Naive thymus-derived CD4-positive, alpha-beta T cell (primary cell): ENCODE measurements at regions of chr13 and their contacts with region 1.

Region 1: DNA sequence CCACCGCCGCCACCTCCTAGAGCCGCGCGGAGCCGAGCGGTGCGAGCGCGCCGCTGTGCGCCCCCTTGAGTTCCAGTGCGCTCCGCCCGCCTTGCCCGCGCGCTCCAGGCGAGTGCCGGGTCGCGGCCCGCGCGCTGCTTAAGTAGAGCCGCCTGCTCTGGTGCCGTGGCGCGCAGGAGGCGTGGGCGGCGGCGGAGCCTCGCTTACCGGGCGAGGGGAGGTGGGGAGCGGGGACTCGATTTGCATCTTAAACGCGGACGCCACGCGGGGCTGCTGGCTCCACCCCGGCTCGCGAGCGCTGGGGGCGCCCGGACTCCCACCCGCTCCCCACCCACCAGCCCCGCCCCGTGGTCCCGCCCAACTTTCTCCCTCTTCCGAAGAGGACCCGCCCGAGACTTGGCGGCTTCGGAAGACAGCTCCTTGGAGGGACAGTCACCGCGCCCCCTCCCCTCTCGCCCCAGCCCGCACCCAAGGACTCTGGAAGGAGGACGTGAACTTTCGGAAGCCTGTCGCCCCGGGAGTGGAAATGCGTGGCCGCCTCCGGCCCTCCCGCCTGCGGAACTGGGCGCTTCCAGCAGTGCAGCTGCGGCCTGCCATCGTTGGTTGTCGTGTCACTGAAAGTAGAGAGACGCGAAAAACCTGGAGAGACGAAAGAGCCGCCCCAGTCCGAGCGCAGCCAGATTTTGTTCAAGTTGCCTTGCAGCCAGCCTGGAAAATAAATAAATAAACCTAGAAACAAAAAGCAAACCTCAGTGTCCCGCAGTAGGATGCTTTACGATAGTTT is at the start of gene KCTD12:
- DNase-seq: peak; percentile 73 to 84 (median 80)
- ATAC-seq: peak; percentile 86
- H3K4me3 ChIP-seq: peak within 1 kb of the TSS; percentile 62
- H3K4me3 Mint-ChIP-seq: peak within 1 kb of the TSS; percentile 88 to 95 (median 92)
- H3K27ac ChIP-seq: peak within 1 kb of the TSS; percentile 55
- H3K27ac Mint-ChIP-seq: peak within 1 kb of the TSS; percentile 63 to 85 (median 76)
- H3K4me1 ChIP-seq: peaks cover 4 to 8% of the 10 kb centered on the region in 2 donors
- H3K4me1 Mint-ChIP-seq: peaks cover 20 to 37% (median 32%) of the 10 kb centered on the region in 7 donors
- H3K27me3 ChIP-seq: peaks cover 0 to 3% of the 10 kb centered on the region in 2 donors
- H3K27me3 Mint-ChIP-seq: peaks cover 0 to 47% (median 8%) of the 10 kb centered on the region in 5 donors
- total RNA-seq, gene KCTD12: 7.6 to 48.0 (median 14.0) TPM

Region 2: DNA sequence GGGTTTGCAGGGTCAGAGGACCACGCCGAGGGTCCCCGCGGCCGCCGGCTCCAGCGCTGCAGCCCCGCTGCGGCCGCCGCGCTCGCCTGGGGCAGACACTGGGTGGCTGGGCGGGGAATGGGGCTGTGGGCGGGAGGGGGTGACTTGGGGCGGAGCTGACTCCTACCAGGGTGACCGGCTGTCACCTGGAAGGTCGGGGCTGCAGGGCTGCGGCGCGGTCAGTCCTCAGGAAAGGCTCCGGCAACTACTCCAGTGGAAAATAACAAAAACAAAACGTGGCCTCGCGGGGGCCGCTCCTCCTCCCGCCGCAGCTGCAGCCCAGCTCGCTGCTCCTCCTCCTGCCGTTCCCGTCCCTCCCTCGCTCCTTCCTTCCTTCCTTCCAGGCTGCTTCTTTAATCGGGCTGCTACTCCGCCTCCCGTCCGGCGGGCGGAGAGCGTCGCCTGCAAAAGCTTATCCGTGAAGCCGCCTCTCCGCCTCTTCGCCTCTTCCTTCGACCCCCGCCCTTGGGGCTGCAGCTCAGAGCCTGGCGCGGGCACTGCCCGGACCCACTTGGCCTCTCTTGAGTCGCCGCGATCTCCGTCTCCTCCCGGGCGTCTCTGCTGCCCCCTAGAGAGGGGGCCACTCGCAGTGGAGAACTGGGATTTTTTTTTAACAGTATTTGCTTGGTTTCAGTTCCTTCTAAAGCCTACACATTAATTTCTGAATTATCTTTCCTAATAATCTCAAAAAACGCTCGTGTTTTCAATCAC is 1404.2 kb before region 1 on chr13 and contains the start of gene TBC1D4:
- CTCF ChIA-PET with region 1: no interaction called
- POLR2A ChIA-PET with region 1: no interaction called
- intact Hi-C with region 1: loop called in 1 of 2 experiments (anchors 5 kb)
- DNase-seq: peak in 8 of 9 donors; percentile 19 to 69 (median 22)
- ATAC-seq: peak; percentile 85
- H3K4me3 ChIP-seq: peak within 1 kb of the TSS; percentile 60
- H3K4me3 Mint-ChIP-seq: peak within 1 kb of the TSS; percentile 90 to 99 (median 95)
- H3K27ac ChIP-seq: no peak within 1 kb of the TSS
- H3K27ac Mint-ChIP-seq: peak within 1 kb of the TSS in 1 of 9 donors; percentile 83
- H3K4me1 ChIP-seq: peaks cover 0 to 5% of the 10 kb centered on the region in 2 donors
- H3K4me1 Mint-ChIP-seq: peaks cover 7 to 24% (median 18%) of the 10 kb centered on the region in 7 donors
- H3K27me3 ChIP-seq: peaks cover 12 to 15% of the 10 kb centered on the region in 2 donors
- H3K27me3 Mint-ChIP-seq: peaks cover 57 to 80% (median 74%) of the 10 kb centered on the region in 5 donors
- total RNA-seq, gene TBC1D4: 12.4 to 73.8 (median 42.8) TPM

Region 3: DNA sequence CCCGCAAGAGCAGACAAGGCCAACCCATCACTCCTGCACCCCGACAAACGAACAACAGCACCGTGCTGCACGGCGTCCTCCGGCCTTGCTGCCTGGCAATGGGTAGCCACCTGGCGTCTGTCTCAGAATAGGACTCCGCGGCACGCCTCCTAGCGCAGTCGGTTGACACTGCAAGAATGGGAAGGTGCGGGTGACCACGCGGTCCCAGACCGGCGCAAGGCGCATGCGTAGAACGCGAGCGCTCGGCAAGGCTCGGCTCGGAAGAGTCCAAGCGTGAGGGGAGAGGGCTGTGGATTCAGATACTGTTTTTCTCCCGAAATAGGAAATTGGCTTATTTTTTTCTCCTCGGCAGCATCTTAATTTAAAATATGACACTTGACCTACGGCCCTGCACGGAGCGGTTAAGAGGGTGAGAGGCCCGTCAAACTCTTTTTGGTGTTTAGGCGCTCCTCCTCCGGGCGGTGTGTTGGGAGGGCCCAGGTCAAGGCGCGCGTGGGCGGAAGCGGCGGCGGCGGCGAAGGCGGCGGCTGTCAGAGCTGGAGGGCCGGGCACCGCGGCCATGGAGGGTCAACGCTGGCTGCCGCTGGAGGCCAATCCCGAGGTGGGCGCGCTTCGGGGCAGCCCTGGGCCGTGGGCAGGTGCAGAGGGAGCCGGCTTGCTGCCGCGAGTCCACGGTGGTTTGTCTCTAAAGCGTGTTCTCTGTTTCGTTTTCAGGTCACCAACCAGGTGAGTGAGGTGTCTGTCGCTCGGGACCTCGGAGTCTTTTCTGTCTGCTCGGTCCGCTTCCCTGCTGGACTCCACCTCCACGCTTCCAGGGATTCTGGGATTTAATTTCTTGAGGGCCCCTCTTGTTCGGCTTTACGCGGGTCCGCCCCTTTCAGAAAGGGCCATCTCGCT is 1337.0 kb before region 1 on chr13 and contains the start of gene UCHL3:
- CTCF ChIA-PET with region 1: no interaction called
- POLR2A ChIA-PET with region 1: no interaction called
- intact Hi-C with region 1: loop called in 1 of 2 experiments (anchors 1 kb)
- DNase-seq: peak; percentile 94 to 99 (median 97)
- ATAC-seq: peak; percentile 97
- H3K4me3 ChIP-seq: peak within 1 kb of the TSS; percentile 95
- H3K4me3 Mint-ChIP-seq: peak within 1 kb of the TSS; percentile 91 to 99 (median 96)
- H3K27ac ChIP-seq: peak within 1 kb of the TSS; percentile 84
- H3K27ac Mint-ChIP-seq: peak within 1 kb of the TSS; percentile 94 to 99 (median 98)
- H3K4me1 ChIP-seq: peaks cover 15% of the 10 kb centered on the region in 2 donors
- H3K4me1 Mint-ChIP-seq: peaks cover 27 to 53% (median 46%) of the 10 kb centered on the region in 7 donors
- H3K27me3 ChIP-seq: no peaks in the 10 kb centered on the region
- H3K27me3 Mint-ChIP-seq: peaks cover 0 to 2% (median 0%) of the 10 kb centered on the region in 5 donors
- total RNA-seq, gene UCHL3: 18.6 to 35.8 (median 20.6) TPM

Region 4: GRCh38 chr13:75760131-75761021 is 1126.1 kb before region 1 on chr13:
- CTCF ChIA-PET with region 1: no interaction called
- POLR2A ChIA-PET with region 1: interaction called, 19 read pairs
- intact Hi-C with region 1: loop called (anchors 5 kb)
- DNase-seq: peak in 7 of 9 donors; percentile 29 to 60 (median 46)
- ATAC-seq: peak; percentile 75
- H3K4me3 ChIP-seq: peak overlapping the region; percentile 65
- H3K4me3 Mint-ChIP-seq: peak overlapping the region; percentile 79 to 96 (median 92)
- H3K27ac ChIP-seq: peak overlapping the region; percentile 78
- H3K27ac Mint-ChIP-seq: peak overlapping the region; percentile 86 to 99 (median 96)
- H3K4me1 ChIP-seq: peaks cover 30 to 32% of the 10 kb centered on the region in 2 donors
- H3K4me1 Mint-ChIP-seq: peaks cover 37 to 72% (median 68%) of the 10 kb centered on the region in 7 donors
- H3K27me3 ChIP-seq: no peaks in the 10 kb centered on the region
- H3K27me3 Mint-ChIP-seq: no peaks in the 10 kb centered on the region

Region 5: GRCh38 chr13:76667551-76667950 is 218.9 kb before region 1 on chr13:
- CTCF ChIA-PET with region 1: interaction called, 6 read pairs
- POLR2A ChIA-PET with region 1: interaction called, 4 read pairs
- intact Hi-C with region 1: loop called in 1 of 2 experiments (anchors 1 kb)
- DNase-seq: peak in 6 of 9 donors; percentile 11 to 38 (median 20)
- ATAC-seq: peak; percentile 63
- H3K4me3 ChIP-seq: no peak overlapping the region
- H3K4me3 Mint-ChIP-seq: no peak overlapping the region
- H3K27ac ChIP-seq: no peak overlapping the region
- H3K27ac Mint-ChIP-seq: no peak overlapping the region
- H3K4me1 ChIP-seq: no peaks in the 10 kb centered on the region
- H3K4me1 Mint-ChIP-seq: no peaks in the 10 kb centered on the region
- H3K27me3 ChIP-seq: no peaks in the 10 kb centered on the region
- H3K27me3 Mint-ChIP-seq: peaks cover 0 to 10% (median 0%) of the 10 kb centered on the region in 5 donors

Region 6: GRCh38 chr13:76822698-76823267 is 63.7 kb before region 1 on chr13:
- CTCF ChIA-PET with region 1: interaction called, 18 read pairs
- POLR2A ChIA-PET with region 1: interaction called, 14 read pairs
- intact Hi-C with region 1: loop called (anchors 1 to 5 kb)
- DNase-seq: peak in 6 of 9 donors; percentile 5 to 36 (median 22)
- ATAC-seq: peak; percentile 52
- H3K4me3 ChIP-seq: no peak overlapping the region
- H3K4me3 Mint-ChIP-seq: no peak overlapping the region
- H3K27ac ChIP-seq: no peak overlapping the region
- H3K27ac Mint-ChIP-seq: no peak overlapping the region
- H3K4me1 ChIP-seq: no peaks in the 10 kb centered on the region
- H3K4me1 Mint-ChIP-seq: peaks cover 0 to 3% (median 0%) of the 10 kb centered on the region in 7 donors
- H3K27me3 ChIP-seq: no peaks in the 10 kb centered on the region
- H3K27me3 Mint-ChIP-seq: peaks cover 0 to 7% (median 0%) of the 10 kb centered on the region in 5 donors

Region 7: DNA sequence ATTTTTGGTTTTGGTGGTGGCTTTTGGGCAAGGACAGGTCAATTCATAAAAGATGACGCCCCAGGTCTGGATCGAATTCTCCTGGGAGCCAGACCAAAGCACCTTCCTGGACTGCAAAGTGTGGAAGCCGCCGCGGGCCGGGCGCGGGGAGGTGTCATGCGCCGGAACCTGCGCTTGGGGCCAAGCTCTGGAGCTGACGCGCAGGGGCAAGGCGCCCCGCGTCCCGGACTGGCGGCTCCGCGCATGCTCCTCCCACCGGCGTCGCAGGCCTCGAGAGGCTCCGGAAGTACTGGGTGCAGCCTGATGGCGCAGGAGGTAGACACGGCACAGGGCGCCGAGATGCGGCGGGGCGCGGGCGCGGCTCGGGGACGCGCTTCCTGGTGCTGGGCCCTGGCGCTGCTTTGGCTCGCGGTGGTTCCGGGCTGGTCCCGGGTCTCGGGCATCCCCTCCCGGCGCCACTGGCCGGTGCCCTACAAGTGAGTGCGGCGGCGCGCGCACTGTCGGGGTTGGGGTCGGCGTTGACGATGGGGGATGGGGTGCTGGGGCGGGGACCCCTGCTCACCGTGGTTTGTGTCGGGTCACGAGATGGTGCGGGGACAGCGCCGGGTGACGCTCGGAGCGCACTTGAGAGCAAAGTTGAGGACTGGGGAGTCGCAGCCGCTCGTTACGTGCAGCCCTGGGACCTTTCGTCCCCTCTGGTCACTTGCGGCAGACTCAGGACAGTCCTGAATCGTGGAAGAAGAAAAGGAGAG is 105.5 kb after region 1 on chr13 and contains the start of gene CLN5:
- CTCF ChIA-PET with region 1: interaction called, 3 read pairs
- POLR2A ChIA-PET with region 1: interaction called, 35 read pairs
- intact Hi-C with region 1: loop called (anchors 1 kb)
- DNase-seq: peak; percentile 93 to 98 (median 96)
- ATAC-seq: peak; percentile 92
- H3K4me3 ChIP-seq: peak within 1 kb of the TSS; percentile 87
- H3K4me3 Mint-ChIP-seq: peak within 1 kb of the TSS; percentile 88 to 99 (median 96)
- H3K27ac ChIP-seq: peak within 1 kb of the TSS; percentile 96
- H3K27ac Mint-ChIP-seq: peak within 1 kb of the TSS; percentile 96 to 99 (median 99)
- H3K4me1 ChIP-seq: peaks cover 12 to 19% of the 10 kb centered on the region in 2 donors
- H3K4me1 Mint-ChIP-seq: peaks cover 27 to 59% (median 53%) of the 10 kb centered on the region in 7 donors
- H3K27me3 ChIP-seq: peaks cover 0 to 3% of the 10 kb centered on the region in 2 donors
- H3K27me3 Mint-ChIP-seq: peaks cover 0 to 12% (median 0%) of the 10 kb centered on the region in 5 donors
- total RNA-seq, gene CLN5: 18.9 to 45.3 (median 27.7) TPM